Natural killer cell (primary cell): ENCODE measurements at regions of chr2 and their contacts with region 1.

Region 1: DNA sequence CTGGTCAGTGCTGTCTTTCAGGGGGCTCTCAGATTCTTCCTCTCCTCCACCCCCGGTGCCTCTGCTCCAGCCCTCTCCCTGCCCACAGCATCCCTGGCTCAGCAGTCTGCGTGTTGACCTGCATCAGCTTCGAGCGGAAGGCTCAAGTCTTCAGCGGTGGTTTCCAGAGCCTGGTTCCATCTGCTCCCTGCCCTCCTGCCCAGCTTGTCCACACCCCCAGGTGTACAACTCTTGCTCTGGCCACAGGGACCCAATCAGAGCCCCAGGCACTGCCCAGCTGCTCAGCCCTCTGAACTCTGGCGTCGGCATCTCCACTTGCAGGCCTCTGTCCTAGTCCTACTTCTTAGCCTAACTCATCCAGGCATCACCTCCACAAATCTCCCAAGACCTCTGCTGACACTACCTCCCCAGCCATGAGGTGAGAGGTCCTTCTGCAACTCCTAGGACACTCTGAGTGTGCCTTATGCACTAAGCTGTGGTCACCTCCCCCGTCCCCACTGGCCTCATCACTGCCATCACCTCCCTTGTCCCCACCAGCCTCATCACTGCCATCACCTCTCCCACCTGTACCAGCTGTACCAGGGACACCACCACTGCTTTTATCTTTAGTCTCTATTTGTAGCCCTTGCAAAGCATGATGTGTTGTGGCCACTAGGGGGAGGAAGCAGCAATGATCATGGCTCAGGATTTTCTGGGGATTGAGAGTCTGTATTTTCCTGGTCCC is 60.9 kb downstream of the EDAR start:
- DNase-seq: peak in 1 of 2 donors; percentile 75
- ATAC-seq: peak in 1 of 3 donors; percentile 50
- H3K4me3 ChIP-seq: no peak overlapping the region
- H3K4me3 Mint-ChIP-seq: no peak overlapping the region
- H3K27ac ChIP-seq: no peak overlapping the region
- H3K27ac Mint-ChIP-seq: no peak overlapping the region
- H3K4me1 ChIP-seq: no peaks in the 10 kb centered on the region
- H3K4me1 Mint-ChIP-seq: no peaks in the 10 kb centered on the region
- H3K27me3 ChIP-seq: no peaks in the 10 kb centered on the region
- H3K27me3 Mint-ChIP-seq: peaks cover 0 to 3% of the 10 kb centered on the region in 2 donors
- CTCF ChIP-seq: peak; percentile 67

Region 2: GRCh38 chr2:108877506-108877905 is 50.6 kb before region 1 on chr2:
- intact Hi-C with region 1: no loop called
- DNase-seq: no peak
- ATAC-seq: no peak
- H3K4me3 ChIP-seq: no peak overlapping the region
- H3K4me3 Mint-ChIP-seq: no peak overlapping the region
- H3K27ac ChIP-seq: no peak overlapping the region
- H3K27ac Mint-ChIP-seq: no peak overlapping the region
- H3K4me1 ChIP-seq: no peaks in the 10 kb centered on the region
- H3K4me1 Mint-ChIP-seq: no peaks in the 10 kb centered on the region
- H3K27me3 ChIP-seq: no peaks in the 10 kb centered on the region
- H3K27me3 Mint-ChIP-seq: no peaks in the 10 kb centered on the region
- CTCF ChIP-seq: no peak

Region 3: DNA sequence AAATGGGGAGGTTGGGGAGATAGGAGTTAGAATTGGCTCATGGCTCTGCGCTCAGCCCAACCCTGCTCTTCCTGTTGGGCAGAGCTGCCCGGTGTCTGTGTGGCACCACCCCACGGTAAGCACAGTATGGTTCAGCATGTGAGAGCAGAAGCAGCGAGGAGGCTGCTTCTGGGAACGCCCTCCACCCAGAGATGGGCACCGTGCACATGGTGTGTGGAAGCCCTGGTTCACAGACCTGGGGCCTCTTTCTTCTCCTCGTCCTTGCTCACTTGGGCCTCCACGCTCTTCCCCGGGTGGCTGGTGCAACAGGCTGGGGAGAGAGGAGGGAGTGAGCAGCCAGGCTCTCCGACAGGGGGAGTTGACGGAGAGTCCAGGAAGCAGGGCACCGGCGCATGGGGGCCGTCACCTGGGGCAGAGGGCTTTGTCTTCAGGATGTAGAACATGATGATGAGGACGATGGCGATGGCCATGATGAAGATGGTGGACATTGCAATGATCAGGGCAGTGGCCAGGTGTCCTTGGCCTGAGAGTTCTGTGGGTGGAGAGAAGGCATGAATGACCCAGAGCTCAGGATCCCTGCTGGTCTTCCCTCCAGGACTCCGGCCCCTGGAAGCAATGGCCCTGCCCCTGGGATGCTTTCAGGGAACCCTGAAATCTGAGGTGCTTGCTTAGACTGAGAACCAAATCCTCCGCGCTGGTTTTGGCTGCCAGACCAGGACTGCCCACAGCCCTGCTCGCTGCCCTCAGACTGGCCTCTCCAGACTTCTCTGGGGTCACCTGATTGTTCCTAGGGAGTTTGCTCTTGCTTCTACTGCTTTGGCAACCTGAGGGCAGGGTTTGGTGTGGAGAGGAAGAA is 17.3 kb before region 1 on chr2:
- intact Hi-C with region 1: no loop called
- DNase-seq: no peak
- ATAC-seq: no peak
- H3K4me3 ChIP-seq: no peak overlapping the region
- H3K4me3 Mint-ChIP-seq: no peak overlapping the region
- H3K27ac ChIP-seq: no peak overlapping the region
- H3K27ac Mint-ChIP-seq: no peak overlapping the region
- H3K4me1 ChIP-seq: no peaks in the 10 kb centered on the region
- H3K4me1 Mint-ChIP-seq: no peaks in the 10 kb centered on the region
- H3K27me3 ChIP-seq: no peaks in the 10 kb centered on the region
- H3K27me3 Mint-ChIP-seq: no peaks in the 10 kb centered on the region
- CTCF ChIP-seq: no peak

Region 4: DNA sequence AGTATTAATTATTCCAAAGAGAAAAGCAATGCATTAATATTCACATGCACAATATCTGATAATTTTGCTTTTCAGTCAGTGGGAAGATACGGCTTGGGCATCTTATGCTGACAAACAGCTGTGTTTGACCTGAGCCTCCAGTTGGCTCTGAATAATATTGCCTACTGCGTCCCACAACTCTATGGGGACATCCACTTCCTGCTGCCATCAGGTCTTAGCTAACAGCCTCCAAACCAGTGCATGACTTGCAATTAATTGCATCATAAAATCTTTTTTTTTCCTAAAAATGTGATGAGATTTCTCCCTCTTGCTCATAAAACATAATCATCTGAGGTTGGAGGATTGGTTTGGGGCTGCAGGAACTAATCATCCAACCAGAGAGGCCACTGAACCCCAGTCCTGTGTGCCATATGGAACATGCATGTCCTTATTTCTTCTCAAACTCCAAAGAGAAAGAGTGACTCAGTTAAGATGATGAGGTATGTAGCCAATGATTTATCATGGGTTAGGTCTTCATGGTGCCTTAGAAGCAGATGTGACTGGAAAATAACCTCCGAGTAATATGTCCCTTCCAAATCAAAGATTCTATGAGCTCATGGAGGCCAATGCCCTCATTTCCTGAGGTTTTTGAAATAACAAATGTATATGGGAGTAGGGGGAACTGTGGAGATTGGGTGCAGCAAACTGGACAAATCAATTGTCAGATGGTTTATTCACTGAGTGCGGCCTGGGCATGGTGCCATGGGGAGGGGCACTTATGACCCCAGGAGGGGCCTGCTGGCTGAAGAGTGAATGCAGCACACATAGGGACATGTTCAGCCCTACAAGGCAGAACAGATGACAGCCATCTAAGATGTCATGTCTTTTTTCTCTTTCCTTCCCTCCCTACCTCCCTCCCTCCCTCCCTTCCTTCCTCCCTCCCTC is 21.5 kb after region 1 on chr2:
- intact Hi-C with region 1: no loop called
- DNase-seq: no peak
- ATAC-seq: no peak
- H3K4me3 ChIP-seq: no peak overlapping the region
- H3K4me3 Mint-ChIP-seq: no peak overlapping the region
- H3K27ac ChIP-seq: no peak overlapping the region
- H3K27ac Mint-ChIP-seq: no peak overlapping the region
- H3K4me1 ChIP-seq: no peaks in the 10 kb centered on the region
- H3K4me1 Mint-ChIP-seq: no peaks in the 10 kb centered on the region
- H3K27me3 ChIP-seq: no peaks in the 10 kb centered on the region
- H3K27me3 Mint-ChIP-seq: peaks cover 0 to 6% of the 10 kb centered on the region in 2 donors
- CTCF ChIP-seq: no peak

Region 5: GRCh38 chr2:109348671-109349550 is 420.8 kb after region 1 on chr2:
- intact Hi-C with region 1: loop called (anchors 5 kb)
- DNase-seq: peak; percentile 26 to 80
- ATAC-seq: peak; percentile 90 to 99 (median 96)
- H3K4me3 ChIP-seq: no peak overlapping the region
- H3K4me3 Mint-ChIP-seq: peak overlapping the region; percentile 70
- H3K27ac ChIP-seq: peak overlapping the region; percentile 41
- H3K27ac Mint-ChIP-seq: peak overlapping the region; percentile 72 to 84
- H3K4me1 ChIP-seq: peaks cover 40% of the 10 kb centered on the region
- H3K4me1 Mint-ChIP-seq: peaks cover 29 to 32% of the 10 kb centered on the region in 2 donors
- H3K27me3 ChIP-seq: no peaks in the 10 kb centered on the region
- H3K27me3 Mint-ChIP-seq: no peaks in the 10 kb centered on the region
- CTCF ChIP-seq: peak; percentile 13

Region 6: DNA sequence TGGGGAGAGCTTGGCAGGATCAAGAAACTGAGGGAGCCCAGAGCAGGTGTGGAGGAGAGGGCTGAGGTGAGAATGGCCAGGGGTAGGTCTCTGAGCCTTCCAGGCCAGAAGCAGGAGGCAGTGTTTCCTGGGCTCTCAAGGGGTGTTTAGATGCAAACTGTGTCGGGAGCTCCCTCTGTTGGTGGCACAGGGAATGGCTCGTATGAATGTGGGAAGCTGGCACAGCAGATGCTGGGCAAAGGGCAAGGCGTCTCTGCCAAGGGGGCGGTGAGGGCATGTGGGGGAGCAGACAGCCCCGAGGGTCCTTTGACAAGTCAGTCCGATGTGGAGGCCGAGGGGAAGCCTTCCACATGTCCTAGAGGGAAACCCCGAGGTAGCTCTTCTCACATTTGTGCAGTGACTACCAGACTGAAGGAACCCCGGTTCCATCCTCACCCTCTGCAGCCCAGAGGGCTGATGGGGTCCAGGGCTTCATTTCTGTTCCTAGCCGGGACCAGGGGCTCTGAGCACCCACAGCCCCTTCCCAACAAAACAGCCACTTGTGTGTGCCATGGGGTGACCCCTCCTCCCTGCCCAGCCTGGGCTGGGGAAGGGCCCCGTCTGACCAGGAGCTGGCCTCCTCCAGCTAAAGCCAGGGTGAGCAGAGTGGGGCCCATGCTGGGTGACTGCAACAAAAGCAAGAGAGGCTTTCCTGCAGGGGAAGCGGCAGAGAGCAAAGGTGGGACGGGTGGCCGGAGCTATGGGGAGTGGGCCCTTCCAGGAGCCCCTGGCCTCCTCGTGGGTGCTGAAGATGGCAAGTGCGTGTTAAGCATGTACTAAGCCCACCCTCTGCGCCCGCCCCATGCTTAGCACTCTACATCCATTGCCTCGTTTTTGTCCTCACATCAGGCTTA is 582.3 kb after region 1 on chr2:
- intact Hi-C with region 1: loop called (anchors 1 kb)
- DNase-seq: peak; percentile 70 to 87
- ATAC-seq: peak; percentile 57 to 91 (median 76)
- H3K4me3 ChIP-seq: no peak overlapping the region
- H3K4me3 Mint-ChIP-seq: no peak overlapping the region
- H3K27ac ChIP-seq: no peak overlapping the region
- H3K27ac Mint-ChIP-seq: no peak overlapping the region
- H3K4me1 ChIP-seq: peaks cover 16% of the 10 kb centered on the region
- H3K4me1 Mint-ChIP-seq: peaks cover 13 to 17% of the 10 kb centered on the region in 2 donors
- H3K27me3 ChIP-seq: peaks cover 4% of the 10 kb centered on the region
- H3K27me3 Mint-ChIP-seq: peaks cover 17 to 18% of the 10 kb centered on the region in 2 donors
- CTCF ChIP-seq: peak; percentile 90